ENCODE measurements at regions of chr2 and their contacts with region 1.

Region 1: GRCh38 chr2:159615140-159615951 is 1.0 kb downstream of the BAZ2B start:
- DNase-seq: peak; percentile 88 to 95 (median 90)
- ATAC-seq: peak; percentile 89
- H3K4me3 ChIP-seq: peak overlapping the region; percentile 66
- H3K27ac ChIP-seq: peak overlapping the region; percentile 96
- H3K4me1 ChIP-seq: peaks cover 5% of the 10 kb centered on the region in 2 experiments; a peak in 3 of 5 replicates
- H3K27me3 ChIP-seq: no peaks in the 10 kb centered on the region
- CTCF ChIP-seq: no peak; a peak in 1 of 6 replicates
- EP300 ChIP-seq: no peak
- POLR2A ChIP-seq: peak; percentile 87
- RAD21 ChIP-seq: no peak

Region 2: DNA sequence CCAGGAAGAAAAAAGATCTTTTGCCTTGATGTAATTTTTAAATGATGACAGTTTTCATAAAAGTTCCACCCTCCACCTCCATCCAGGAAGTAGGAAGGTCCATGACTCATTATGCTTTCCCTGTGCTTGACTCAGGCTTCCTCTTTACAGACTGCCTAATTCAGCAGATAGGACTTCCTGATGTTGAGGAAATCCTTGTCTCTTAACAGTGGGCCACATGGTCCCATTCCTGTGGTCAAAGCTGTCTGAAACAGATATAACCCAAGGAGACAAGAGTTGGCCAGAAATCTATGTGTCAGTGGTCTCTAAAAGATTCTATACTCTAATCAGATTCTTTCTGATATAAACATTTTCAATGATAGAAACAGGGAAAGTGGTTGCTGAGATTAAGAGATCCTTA is 118.1 kb before region 1 on chr2:
- CTCF ChIA-PET with region 1: no interaction called
- POLR2A ChIA-PET with region 1: no interaction called
- in situ Hi-C with region 1: no loop called
- intact Hi-C with region 1: loop called (anchors 5 kb)
- DNase-seq: peak; percentile 58 to 87 (median 67)
- ATAC-seq: peak; percentile 98
- H3K4me3 ChIP-seq: no peak overlapping the region
- H3K27ac ChIP-seq: peak overlapping the region; percentile 48; the same call in 2 of the 3 replicates
- H3K4me1 ChIP-seq: peaks cover 0 to 7% of the 10 kb centered on the region in 2 experiments; a peak in 2 of 5 replicates
- H3K27me3 ChIP-seq: no peaks in the 10 kb centered on the region
- CTCF ChIP-seq: no peak
- EP300 ChIP-seq: peak; percentile 86
- POLR2A ChIP-seq: no peak
- RAD21 ChIP-seq: no peak

Region 3: GRCh38 chr2:159516241-159516766 is 99.0 kb before region 1 on chr2:
- CTCF ChIA-PET with region 1: no interaction called
- POLR2A ChIA-PET with region 1: no interaction called
- in situ Hi-C with region 1: no loop called
- intact Hi-C with region 1: loop called (anchors 5 kb)
- DNase-seq: peak in 2 of 4 experiments; percentile 20 to 26
- ATAC-seq: peak; percentile 85
- H3K4me3 ChIP-seq: peak overlapping the region; percentile 20
- H3K27ac ChIP-seq: peak overlapping the region; percentile 76
- H3K4me1 ChIP-seq: peaks cover 0 to 7% of the 10 kb centered on the region in 2 experiments; a peak in 1 of 5 replicates
- H3K27me3 ChIP-seq: no peaks in the 10 kb centered on the region
- CTCF ChIP-seq: peak in 1 of 3 experiments; percentile 35; a peak in 1 of 6 replicates
- EP300 ChIP-seq: no peak
- POLR2A ChIP-seq: no peak
- RAD21 ChIP-seq: peak; percentile 27 to 45; a peak in 2 of 4 replicates

Region 4: DNA sequence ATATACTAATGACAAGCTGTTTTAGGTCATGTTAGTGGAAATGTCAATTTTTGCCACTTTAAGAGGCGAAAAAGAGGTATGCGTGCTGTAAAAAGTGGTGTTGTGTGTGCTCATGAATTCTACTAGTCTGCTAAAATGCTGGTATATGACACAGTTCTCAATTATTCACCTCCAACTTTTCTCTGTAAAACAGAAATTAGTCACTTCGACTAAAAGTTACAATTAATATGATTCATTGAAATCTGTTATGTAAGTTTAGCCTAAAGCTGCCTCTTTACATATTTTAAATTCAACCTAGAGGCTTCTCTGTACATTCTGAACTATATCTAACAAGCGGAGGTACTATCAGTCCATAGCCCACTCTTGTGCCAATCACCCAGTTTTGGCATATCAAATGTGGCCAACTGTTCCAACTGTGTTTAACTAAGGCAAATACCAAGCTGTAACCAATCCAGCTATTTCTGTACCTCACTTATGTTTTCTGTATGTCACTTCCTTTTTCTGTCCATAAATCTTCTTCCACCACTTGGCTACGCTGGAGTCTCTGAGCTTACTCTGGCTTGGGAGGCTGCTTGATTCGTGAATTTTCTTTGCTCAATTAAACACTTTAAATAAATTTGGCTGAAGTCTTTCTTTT is 19.8 kb before region 1 on chr2:
- CTCF ChIA-PET with region 1: no interaction called
- POLR2A ChIA-PET with region 1: interaction called, 13 read pairs
- in situ Hi-C with region 1: no loop called
- intact Hi-C with region 1: no loop called
- DNase-seq: peak in 1 of 4 experiments; percentile 30
- ATAC-seq: peak; percentile 63
- H3K4me3 ChIP-seq: no peak overlapping the region
- H3K27ac ChIP-seq: peak overlapping the region; percentile 9; the same call in 1 of the 3 replicates
- H3K4me1 ChIP-seq: no peaks in the 10 kb centered on the region; a peak in 1 of 5 replicates
- H3K27me3 ChIP-seq: no peaks in the 10 kb centered on the region
- CTCF ChIP-seq: peak in 1 of 3 experiments; percentile 43; a peak in 2 of 6 replicates
- EP300 ChIP-seq: no peak
- POLR2A ChIP-seq: no peak
- RAD21 ChIP-seq: peak in 1 of 2 experiments; percentile 40; a peak in 3 of 4 replicates

Region 5: DNA sequence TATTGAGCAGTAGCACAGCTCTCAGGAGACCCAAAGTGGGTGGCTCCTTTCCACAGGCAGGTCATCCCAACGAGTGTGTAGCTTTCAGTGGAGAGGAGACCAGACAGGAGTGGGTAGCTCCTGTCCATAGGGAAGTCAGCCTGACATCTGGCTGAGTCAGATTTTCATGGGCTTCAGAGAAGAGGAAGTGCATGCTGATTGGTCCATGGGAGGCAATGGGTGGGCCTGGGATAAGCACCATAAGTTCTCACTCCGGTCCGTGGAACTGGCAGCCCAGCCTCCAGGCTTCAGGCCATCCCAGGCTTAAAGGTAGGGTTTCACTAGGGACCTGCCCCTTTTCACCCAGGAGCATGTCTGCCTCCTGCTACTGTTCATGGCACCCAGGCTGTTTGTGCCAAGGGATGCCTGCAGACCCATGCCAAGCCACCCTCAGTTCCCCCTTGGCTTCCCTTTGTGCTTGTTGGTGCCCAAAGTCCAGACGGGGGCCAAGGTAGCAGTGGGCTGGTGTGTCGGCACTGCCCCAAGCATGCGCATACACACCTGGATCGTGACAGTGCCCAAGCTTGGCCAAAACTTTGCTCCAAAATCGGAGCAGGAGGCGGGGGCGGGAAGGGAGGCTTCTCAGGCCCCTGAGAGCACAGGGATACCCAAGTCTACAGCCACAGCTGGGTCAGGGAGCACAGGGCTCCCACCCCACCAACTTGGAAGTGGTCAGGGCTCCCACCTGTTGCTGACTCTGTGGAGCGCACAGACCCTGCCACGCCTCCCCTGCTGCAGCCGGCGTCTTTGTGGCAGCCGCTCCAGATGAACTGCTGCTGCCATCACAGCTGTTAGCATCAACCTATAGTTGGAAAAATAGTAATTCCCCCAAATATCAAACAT is 123.4 kb after region 1 on chr2:
- CTCF ChIA-PET with region 1: no interaction called
- POLR2A ChIA-PET with region 1: no interaction called
- in situ Hi-C with region 1: no loop called
- intact Hi-C with region 1: no loop called
- DNase-seq: peak in 3 of 4 experiments; percentile 28 to 48 (median 38)
- ATAC-seq: peak; percentile 72
- H3K4me3 ChIP-seq: no peak overlapping the region
- H3K27ac ChIP-seq: no peak overlapping the region
- H3K4me1 ChIP-seq: peaks cover 0 to 9% of the 10 kb centered on the region in 2 experiments; a peak in 2 of 5 replicates
- H3K27me3 ChIP-seq: no peaks in the 10 kb centered on the region
- CTCF ChIP-seq: no peak
- EP300 ChIP-seq: no peak
- POLR2A ChIP-seq: no peak; the same call in none of the 2 replicates
- RAD21 ChIP-seq: no peak

Region 6: DNA sequence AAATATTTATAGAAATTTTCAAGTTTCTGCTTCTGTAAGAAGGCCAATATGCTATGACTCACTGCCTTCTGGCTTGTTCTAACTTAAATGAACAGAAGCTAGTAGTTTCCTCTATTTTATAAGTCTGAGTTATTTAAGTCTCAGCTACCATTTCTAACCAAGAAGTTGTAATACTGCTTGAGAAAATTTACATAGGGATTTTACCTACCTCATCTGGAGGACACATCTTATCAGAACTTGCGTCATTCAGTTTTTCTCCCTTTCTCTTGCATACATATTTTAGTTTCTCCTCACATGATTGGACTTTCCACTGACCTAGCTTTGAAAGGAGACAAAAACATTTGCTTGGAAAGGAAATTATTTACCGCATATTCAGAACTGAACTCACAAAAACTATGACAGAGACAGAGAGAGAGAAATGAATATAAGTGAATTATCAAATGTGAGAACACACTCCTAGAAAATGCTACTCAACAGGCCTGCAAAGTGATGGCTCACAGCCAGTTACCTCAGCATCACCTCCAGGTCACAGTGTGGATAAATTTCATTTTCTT is 263.8 kb after region 1 on chr2:
- CTCF ChIA-PET with region 1: no interaction called
- POLR2A ChIA-PET with region 1: no interaction called
- in situ Hi-C with region 1: no loop called
- intact Hi-C with region 1: no loop called
- DNase-seq: no peak
- ATAC-seq: no peak
- H3K4me3 ChIP-seq: no peak overlapping the region
- H3K27ac ChIP-seq: no peak overlapping the region
- H3K4me1 ChIP-seq: no peaks in the 10 kb centered on the region
- H3K27me3 ChIP-seq: 0 out of 5 replicates have a peak, but pooled peaks cover 0 to 2% of the 10 kb centered on the region in 2 experiments
- CTCF ChIP-seq: no peak
- EP300 ChIP-seq: no peak
- POLR2A ChIP-seq: no peak
- RAD21 ChIP-seq: no peak